Sigmoid colon (tissue), 7 donors: ENCODE measurements at regions of chr12 and their contacts with region 1.

Region 1: GRCh38 chr12:123115409-123116121 is 35.3 kb downstream of the PITPNM2 start:
- DNase-seq: peak; percentile 93
- H3K4me3 ChIP-seq: peak overlapping the region in 1 of 4 donors; percentile 11
- H3K27ac ChIP-seq: peak overlapping the region; percentile 76 to 90 (median 80)
- H3K4me1 ChIP-seq: peaks cover 0 to 92% (median 77%) of the 10 kb centered on the region in 4 donors
- H3K27me3 ChIP-seq: no peaks in the 10 kb centered on the region
- CTCF ChIP-seq: no peak
- EP300 ChIP-seq: peak in 2 of 4 donors; percentile 49 to 55
- POLR2A ChIP-seq: no peak

Region 2: GRCh38 chr12:122593910-122594309 is 521.7 kb before region 1 on chr12:
- intact Hi-C with region 1: no loop called
- DNase-seq: no peak
- H3K4me3 ChIP-seq: no peak overlapping the region
- H3K27ac ChIP-seq: no peak overlapping the region
- H3K4me1 ChIP-seq: no peaks in the 10 kb centered on the region
- H3K27me3 ChIP-seq: no peaks in the 10 kb centered on the region
- CTCF ChIP-seq: no peak
- EP300 ChIP-seq: no peak
- POLR2A ChIP-seq: no peak

Region 3: GRCh38 chr12:122871851-122872780 is 243.4 kb before region 1 on chr12:
- intact Hi-C with region 1: no loop called
- DNase-seq: peak; percentile 76
- H3K4me3 ChIP-seq: peak overlapping the region in 3 of 4 donors; percentile 23 to 33 (median 31)
- H3K27ac ChIP-seq: peak overlapping the region; percentile 71 to 84 (median 76)
- H3K4me1 ChIP-seq: peaks cover 0 to 47% (median 40%) of the 10 kb centered on the region in 4 donors
- H3K27me3 ChIP-seq: no peaks in the 10 kb centered on the region
- CTCF ChIP-seq: no peak
- EP300 ChIP-seq: no peak
- POLR2A ChIP-seq: no peak

Region 4: DNA sequence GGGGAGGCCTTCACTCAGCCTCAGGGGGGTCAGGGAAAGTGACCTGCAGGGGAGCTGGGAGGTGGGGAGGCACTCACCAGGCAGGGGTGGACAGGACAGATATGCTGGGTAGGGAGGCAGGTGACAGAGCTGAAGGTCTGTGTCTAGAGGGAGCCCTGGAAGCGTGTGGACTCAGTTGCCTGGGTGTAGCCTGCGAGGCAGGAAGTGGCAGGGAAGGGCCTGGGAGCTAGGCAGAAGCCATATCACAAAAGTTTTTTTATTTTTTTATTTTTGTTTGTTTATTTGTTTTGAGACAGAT is 95.8 kb before region 1 on chr12:
- intact Hi-C with region 1: no loop called
- DNase-seq: no peak
- H3K4me3 ChIP-seq: no peak overlapping the region
- H3K27ac ChIP-seq: no peak overlapping the region
- H3K4me1 ChIP-seq: no peaks in the 10 kb centered on the region
- H3K27me3 ChIP-seq: no peaks in the 10 kb centered on the region
- CTCF ChIP-seq: no peak
- EP300 ChIP-seq: no peak
- POLR2A ChIP-seq: no peak

Region 5: GRCh38 chr12:123050331-123050831 is 65.2 kb before region 1 on chr12:
- intact Hi-C with region 1: loop called (anchors 5 kb)
- DNase-seq: peak; percentile 85
- H3K4me3 ChIP-seq: no peak overlapping the region
- H3K27ac ChIP-seq: peak overlapping the region; percentile 67 to 86 (median 78)
- H3K4me1 ChIP-seq: peaks cover 0 to 71% (median 53%) of the 10 kb centered on the region in 4 donors
- H3K27me3 ChIP-seq: no peaks in the 10 kb centered on the region
- CTCF ChIP-seq: no peak
- EP300 ChIP-seq: peak in 1 of 4 donors; percentile 35
- POLR2A ChIP-seq: no peak

Region 6: GRCh38 chr12:123064885-123065619 is 50.5 kb before region 1 on chr12:
- intact Hi-C with region 1: loop called (anchors 5 kb)
- DNase-seq: no peak
- H3K4me3 ChIP-seq: no peak overlapping the region
- H3K27ac ChIP-seq: peak overlapping the region; percentile 69 to 89 (median 80)
- H3K4me1 ChIP-seq: peaks cover 0 to 71% (median 63%) of the 10 kb centered on the region in 4 donors
- H3K27me3 ChIP-seq: no peaks in the 10 kb centered on the region
- CTCF ChIP-seq: no peak
- EP300 ChIP-seq: no peak
- POLR2A ChIP-seq: no peak

Region 7: GRCh38 chr12:123141615-123142517 is 26.3 kb after region 1 on chr12:
- intact Hi-C with region 1: loop called (anchors 2 kb)
- DNase-seq: peak; percentile 85
- H3K4me3 ChIP-seq: no peak overlapping the region
- H3K27ac ChIP-seq: peak overlapping the region; percentile 82 to 92 (median 84)
- H3K4me1 ChIP-seq: peaks cover 0 to 57% (median 46%) of the 10 kb centered on the region in 4 donors
- H3K27me3 ChIP-seq: no peaks in the 10 kb centered on the region
- CTCF ChIP-seq: no peak
- EP300 ChIP-seq: peak in 1 of 4 donors; percentile 29
- POLR2A ChIP-seq: no peak

Region 8: DNA sequence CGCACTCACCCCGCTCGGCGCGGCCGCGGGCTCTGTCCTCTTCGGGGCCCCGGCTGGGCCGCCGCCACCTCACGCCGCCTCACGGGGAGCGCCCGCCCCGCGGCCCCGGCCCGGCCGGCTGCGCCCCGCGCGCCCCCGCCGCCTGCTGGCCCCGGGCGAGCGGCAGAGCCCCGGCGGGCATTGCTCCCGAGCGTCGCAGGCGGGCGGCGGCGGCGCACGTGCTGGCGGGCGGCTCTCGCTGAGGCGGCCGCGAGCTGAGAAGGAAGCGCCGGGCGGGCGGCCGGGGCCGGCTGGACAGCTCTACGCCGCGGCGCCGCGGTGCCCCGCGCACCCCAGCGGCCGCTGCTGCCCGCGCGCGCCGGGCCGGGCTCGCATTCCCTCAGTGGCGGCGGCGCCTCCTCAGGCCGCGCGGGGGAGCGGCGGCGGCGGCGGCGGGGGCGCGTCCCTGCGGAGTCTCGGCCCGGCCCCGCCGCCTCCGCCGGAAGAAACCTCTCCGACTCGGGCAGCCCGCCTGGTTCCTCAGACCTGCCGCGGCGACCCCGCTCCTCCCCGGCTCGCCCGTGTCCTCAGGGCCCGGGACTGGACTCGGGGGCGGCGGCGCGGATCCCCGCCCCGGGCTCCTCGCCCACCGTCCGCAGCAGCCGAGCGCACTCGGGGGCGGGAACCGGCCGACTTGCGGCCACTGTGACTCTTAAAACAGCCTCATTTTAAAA is 35.3 kb after region 1 on chr12 and contains the start of gene PITPNM2:
- intact Hi-C with region 1: loop called (anchors 5 kb)
- DNase-seq: peak; percentile 78
- H3K4me3 ChIP-seq: peak within 1 kb of the TSS; percentile 54 to 86 (median 82)
- H3K27ac ChIP-seq: peak within 1 kb of the TSS; percentile 88 to 95 (median 92)
- H3K4me1 ChIP-seq: peaks cover 0 to 33% (median 28%) of the 10 kb centered on the region in 4 donors
- H3K27me3 ChIP-seq: no peaks in the 10 kb centered on the region
- CTCF ChIP-seq: peak in 1 of 4 experiments; percentile 33
- EP300 ChIP-seq: no peak
- POLR2A ChIP-seq: no peak
- total RNA-seq, gene PITPNM2: 6.4 to 19.5 (median 11.7) TPM